ENCODE measurements at regions of chr1 and their contacts with region 1.

Region 1: GRCh38 chr1:42747125-42747524 is 7.1 kb upstream of the CLDN19 start:
- DNase-seq: no peak
- ATAC-seq: peak; percentile 46
- H3K4me3 ChIP-seq: no peak overlapping the region
- H3K27ac ChIP-seq: no peak overlapping the region
- H3K4me1 ChIP-seq: no peaks in the 10 kb centered on the region
- H3K27me3 ChIP-seq: no peaks in the 10 kb centered on the region

Region 2: DNA sequence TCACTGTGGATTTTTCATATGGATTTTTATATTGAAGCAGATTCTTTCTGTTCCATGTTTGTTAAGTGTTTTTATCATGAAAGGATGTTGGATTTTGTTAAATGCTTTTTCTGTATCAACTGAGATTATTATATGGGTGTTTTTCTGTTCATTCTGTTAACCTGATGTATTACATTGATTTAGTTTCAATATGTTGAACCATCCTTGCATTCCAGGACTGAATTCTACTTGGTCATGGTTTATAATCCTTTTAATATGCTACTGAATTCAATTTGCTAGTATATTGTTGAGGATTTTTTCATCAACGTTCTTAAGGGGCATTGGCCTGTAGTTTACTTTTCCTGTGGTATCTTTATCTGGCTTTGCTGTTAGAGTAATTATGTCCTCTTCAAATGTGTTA is 228.2 kb before region 1 on chr1:
- intact Hi-C with region 1: loop called in 1 of 2 experiments (anchors 5 kb)
- DNase-seq: no peak
- ATAC-seq: no peak
- H3K4me3 ChIP-seq: no peak overlapping the region
- H3K27ac ChIP-seq: no peak overlapping the region
- H3K4me1 ChIP-seq: no peaks in the 10 kb centered on the region
- H3K27me3 ChIP-seq: no peaks in the 10 kb centered on the region

Region 3: DNA sequence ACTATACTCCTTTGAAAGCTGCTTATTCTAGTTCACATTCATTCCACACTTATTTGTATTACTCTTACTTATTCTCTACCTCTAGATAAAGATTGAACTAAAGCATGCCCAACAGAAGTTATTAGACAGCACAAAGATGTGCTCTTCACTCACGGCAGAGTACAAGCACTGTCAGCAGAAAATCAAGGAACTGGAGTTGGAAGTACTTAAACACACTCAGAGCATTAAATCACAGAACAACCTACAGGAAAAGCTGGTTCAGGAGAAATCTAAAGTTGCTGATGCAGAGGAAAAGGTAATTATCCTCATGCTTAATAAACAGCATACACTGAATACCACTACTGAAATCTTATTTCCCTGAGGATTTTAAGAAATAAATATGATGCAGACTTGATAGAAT is 170.2 kb before region 1 on chr1:
- intact Hi-C with region 1: loop called (anchors 10 kb)
- DNase-seq: no peak
- ATAC-seq: no peak
- H3K4me3 ChIP-seq: no peak overlapping the region
- H3K27ac ChIP-seq: no peak overlapping the region
- H3K4me1 ChIP-seq: no peaks in the 10 kb centered on the region
- H3K27me3 ChIP-seq: no peaks in the 10 kb centered on the region

Region 4: GRCh38 chr1:42852613-42852990 is 105.5 kb after region 1 on chr1:
- intact Hi-C with region 1: no loop called
- DNase-seq: no peak
- ATAC-seq: no peak
- H3K4me3 ChIP-seq: no peak overlapping the region
- H3K27ac ChIP-seq: no peak overlapping the region
- H3K4me1 ChIP-seq: no peaks in the 10 kb centered on the region
- H3K27me3 ChIP-seq: no peaks in the 10 kb centered on the region

Region 5: DNA sequence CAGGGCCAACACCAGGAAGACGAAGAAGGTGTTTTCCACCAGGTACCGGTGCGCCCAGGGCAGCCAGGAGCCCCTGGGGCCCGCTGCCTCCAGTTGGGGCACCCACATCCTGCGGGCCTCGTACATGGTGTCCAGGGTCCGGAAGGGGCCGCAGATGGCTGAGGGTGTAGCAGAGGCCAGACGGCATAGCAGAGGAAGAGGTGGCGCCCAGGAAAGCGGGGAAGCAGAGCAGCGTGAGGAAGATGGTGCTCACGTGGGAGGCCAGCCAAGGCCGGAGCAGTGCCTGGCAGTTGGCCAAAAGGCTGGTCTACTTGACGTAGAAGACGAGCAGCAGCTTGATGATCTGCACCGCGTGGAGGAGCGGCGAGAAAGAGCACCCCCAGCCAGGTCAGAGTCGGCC is 139.7 kb after region 1 on chr1:
- intact Hi-C with region 1: no loop called
- DNase-seq: no peak
- ATAC-seq: no peak
- H3K4me3 ChIP-seq: no peak overlapping the region
- H3K27ac ChIP-seq: no peak overlapping the region
- H3K4me1 ChIP-seq: no peaks in the 10 kb centered on the region
- H3K27me3 ChIP-seq: no peaks in the 10 kb centered on the region